ENCODE measurements at regions of chr6 and their contacts with region 1.

Region 1: GRCh38 chr6:71533939-71534379 is 245.3 kb downstream of the OGFRL1 start:
- DNase-seq: no peak
- ATAC-seq: no peak
- H3K4me3 ChIP-seq: no peak overlapping the region
- H3K27ac ChIP-seq: no peak overlapping the region
- H3K4me1 ChIP-seq: no peaks in the 10 kb centered on the region
- H3K27me3 ChIP-seq: no peaks in the 10 kb centered on the region
- CTCF ChIP-seq: peak; percentile 44 to 73 (median 69)
- POLR2A ChIP-seq: no peak

Region 2: DNA sequence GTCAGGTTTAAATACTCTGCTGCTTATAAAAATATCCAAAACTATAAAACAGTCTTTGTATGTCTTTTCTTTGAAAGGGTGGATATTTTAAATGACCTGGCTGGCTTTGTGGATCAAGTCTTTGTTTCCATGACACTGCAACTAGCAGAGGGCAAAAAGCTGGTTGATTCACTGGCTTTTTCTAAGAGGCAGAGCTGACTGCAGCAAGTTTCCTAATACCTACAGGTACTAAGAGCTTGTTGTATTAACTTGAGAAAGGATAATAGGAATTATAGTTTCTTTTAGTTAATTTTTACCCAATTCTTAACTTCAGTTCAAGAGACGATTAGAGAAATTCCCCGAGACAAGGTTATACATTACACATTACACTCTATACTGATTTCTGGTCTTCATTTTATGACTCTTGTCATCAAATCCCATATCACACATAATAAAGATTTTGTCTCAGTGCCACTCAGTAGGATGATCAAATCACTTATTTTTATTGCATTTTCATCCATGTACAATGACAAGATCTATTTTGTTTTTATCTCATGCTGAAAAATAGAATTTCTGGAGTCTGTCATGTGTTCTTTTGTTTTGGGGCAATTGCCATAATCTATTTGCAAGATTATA is 232.3 kb after region 1 on chr6:
- intact Hi-C with region 1: no loop called
- DNase-seq: no peak
- ATAC-seq: no peak
- H3K4me3 ChIP-seq: no peak overlapping the region
- H3K27ac ChIP-seq: no peak overlapping the region
- H3K4me1 ChIP-seq: no peaks in the 10 kb centered on the region
- H3K27me3 ChIP-seq: no peaks in the 10 kb centered on the region
- CTCF ChIP-seq: no peak
- POLR2A ChIP-seq: no peak

Region 3: DNA sequence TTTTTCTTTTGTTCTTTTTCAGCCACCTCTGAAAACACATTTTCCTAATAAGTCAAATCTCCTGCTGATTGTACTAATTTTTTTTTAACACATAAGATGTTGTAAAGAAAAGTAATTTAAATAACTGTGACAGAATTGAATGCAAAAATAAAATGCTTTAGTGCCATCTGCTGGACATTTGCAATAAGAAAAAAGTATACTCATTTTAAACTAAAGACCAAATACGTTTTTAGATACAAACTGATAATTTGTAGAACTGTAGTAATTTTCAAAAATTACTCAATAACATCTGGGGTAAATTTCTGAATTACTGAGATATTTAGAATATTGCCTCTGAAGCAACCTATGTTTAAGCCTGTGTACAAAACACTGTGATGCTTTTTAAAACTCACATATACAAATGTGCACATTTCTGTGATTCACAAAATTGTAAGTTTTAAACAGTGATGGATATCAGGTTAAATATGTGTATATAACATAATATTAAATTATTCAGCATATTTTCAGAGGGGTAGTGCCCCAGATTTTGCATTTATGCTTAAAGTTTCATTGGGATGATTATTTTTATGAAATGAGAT is 551.1 kb after region 1 on chr6:
- intact Hi-C with region 1: loop called in 1 of 2 experiments (anchors 5 kb)
- DNase-seq: no peak
- ATAC-seq: no peak
- H3K4me3 ChIP-seq: no peak overlapping the region
- H3K27ac ChIP-seq: no peak overlapping the region
- H3K4me1 ChIP-seq: no peaks in the 10 kb centered on the region
- H3K27me3 ChIP-seq: no peaks in the 10 kb centered on the region
- CTCF ChIP-seq: peak; percentile 28 to 58 (median 52)
- POLR2A ChIP-seq: no peak